GM10248 (cell line): ENCODE measurements at regions of chr1 and their contacts with region 1.

Region 1: DNA sequence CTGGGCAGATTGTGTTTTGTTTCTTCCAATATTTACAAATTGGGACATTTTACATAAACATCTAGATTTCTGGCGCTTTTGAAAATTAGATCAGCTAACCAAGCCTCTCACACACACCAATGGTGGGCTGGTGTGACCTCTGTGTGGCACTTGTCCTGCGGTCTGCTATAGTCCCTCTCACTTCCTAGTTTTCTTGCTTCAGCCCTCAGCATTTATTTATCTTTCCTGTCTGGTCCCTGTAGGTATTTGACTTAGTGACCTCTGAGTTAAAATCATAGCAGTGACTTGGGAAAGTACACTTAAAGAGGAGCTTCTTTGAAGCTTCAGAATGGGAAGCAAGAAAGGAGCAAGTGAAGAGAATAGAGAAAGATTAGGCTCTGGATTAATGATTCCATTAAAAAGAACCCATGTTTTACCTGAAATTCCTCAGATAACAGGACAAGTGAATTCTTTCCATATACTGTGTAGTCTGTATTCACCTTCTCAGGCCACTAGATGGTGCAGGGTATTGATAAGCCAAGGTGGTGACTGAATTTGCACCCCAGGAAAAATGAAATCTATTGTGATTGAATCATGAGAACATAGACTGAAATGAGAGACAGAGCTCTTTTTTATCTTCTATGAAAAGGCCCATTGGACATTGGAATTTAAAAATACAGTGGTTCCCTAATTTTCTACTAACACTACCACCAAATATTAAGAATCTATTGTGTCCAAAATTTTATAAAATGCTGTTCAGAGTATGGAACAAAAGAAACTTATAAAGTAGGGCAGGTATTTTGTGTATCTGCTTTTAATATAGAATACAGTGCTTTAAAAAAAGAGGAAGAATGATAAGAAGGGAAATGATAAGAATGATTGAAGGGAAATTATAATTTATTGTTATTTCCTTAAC is 7.1 kb upstream of the DIPK1A start:
- DNase-seq: no peak
- CTCF ChIP-seq: peak; percentile 65

Region 2: DNA sequence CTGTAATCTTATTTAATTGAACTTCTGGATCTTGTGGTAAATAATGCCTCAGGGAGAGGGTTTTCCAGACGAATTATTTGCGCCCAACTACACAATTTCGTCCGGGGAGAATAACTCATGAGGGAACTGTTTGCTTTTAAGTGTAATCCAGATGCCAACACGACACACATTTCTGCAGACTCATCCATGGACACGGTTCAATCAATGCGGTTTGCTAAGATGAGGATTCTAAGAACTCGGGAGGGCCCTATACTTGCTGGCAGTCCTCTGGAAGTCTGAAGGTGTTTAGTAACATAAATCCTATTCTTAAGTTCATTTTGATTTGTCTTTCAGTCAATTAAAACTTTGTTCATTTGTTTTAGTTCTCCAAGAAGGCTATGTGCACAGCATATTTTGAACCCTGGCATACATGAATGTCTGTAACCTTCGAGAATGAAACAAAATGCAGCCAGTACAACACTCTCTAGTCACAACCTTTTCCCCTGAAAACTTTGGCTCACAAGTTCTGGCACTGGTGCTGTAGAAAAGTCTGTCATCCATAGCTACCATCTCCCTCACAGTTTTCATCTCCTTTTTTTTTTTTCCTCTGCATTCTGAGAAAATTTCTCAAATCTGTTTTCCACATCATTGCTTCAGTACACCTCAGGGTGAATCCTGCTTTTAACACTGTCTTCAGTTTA is 45.9 kb before region 1 on chr1:
- CTCF ChIA-PET with region 1: no interaction called
- POLR2A ChIA-PET with region 1: no interaction called
- DNase-seq: no peak
- CTCF ChIP-seq: no peak

Region 3: GRCh38 chr1:92980732-92981647 is 12.6 kb after region 1 on chr1:
- CTCF ChIA-PET with region 1: interaction called, 66 read pairs
- POLR2A ChIA-PET with region 1: no interaction called
- DNase-seq: no peak
- CTCF ChIP-seq: no peak

Region 4: DNA sequence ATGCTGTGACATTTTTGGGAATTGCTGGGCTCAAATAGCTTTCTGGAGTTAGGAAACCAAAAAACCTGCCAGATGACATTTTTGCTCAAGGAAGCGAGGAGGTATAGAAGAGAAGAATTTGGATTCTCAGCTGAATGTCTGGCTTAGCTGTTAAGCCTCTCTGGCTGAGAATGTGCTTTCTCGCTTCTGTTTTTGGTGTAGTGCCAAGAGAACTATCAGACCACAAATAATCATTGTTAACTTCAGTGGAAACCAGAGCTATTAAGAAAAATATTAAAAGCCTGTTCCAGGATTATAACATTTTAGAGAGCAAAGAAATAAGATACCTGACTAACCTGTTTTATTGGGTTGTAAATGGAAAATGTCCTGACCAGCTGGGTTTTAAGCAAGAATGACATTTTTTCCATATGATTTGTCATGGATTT is 32.4 kb after region 1 on chr1:
- CTCF ChIA-PET with region 1: interaction called, 12 read pairs
- POLR2A ChIA-PET with region 1: no interaction called
- DNase-seq: no peak
- CTCF ChIP-seq: no peak

Region 5: DNA sequence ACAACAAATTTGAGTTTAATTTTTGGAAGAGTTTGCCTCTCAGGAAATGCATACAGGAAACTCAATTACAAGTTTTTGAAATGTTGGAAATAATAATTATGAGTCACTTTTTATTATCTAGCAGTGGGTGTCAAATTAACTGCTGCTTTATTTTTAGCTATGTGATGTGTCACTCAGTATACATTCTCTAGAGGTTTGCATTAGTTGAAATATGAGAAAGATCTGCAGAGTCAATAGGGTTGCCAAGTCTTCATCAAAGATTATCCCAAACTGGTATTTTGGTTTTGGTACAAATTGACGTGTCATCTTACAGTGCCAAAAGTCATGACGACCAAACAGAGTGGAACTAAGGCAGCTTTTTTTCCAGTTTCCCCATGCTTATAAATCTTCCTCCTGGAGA is 47.2 kb after region 1 on chr1:
- CTCF ChIA-PET with region 1: interaction called, 10 read pairs
- POLR2A ChIA-PET with region 1: no interaction called
- DNase-seq: no peak
- CTCF ChIP-seq: no peak